Activated CD8-positive, alpha-beta T cell treated with anti-CD3 and anti-CD28 coated beads for 36 hours (primary cell): ENCODE measurements at regions of chr12 and their contacts with region 1.

Region 1: GRCh38 chr12:91382081-91382543 is 199.5 kb upstream of the DCN start:
- DNase-seq: peak; percentile 92
- ATAC-seq: peak; percentile 79
- H3K4me3 Mint-ChIP-seq: peak overlapping the region; percentile 77
- H3K27ac Mint-ChIP-seq: no peak overlapping the region
- H3K4me1 Mint-ChIP-seq: peaks cover 3% of the 10 kb centered on the region
- H3K27me3 Mint-ChIP-seq: no peaks in the 10 kb centered on the region
- CTCF ChIP-seq: peak; percentile 83

Region 2: GRCh38 chr12:91361864-91362263 is 20.2 kb before region 1 on chr12:
- CTCF ChIA-PET with region 1: interaction called, 15 read pairs
- POLR2A ChIA-PET with region 1: no interaction called
- intact Hi-C with region 1: no loop called
- DNase-seq: no peak
- ATAC-seq: peak; percentile 60
- H3K4me3 Mint-ChIP-seq: no peak overlapping the region
- H3K27ac Mint-ChIP-seq: no peak overlapping the region
- H3K4me1 Mint-ChIP-seq: no peaks in the 10 kb centered on the region
- H3K27me3 Mint-ChIP-seq: no peaks in the 10 kb centered on the region
- CTCF ChIP-seq: peak; percentile 63

Region 3: GRCh38 chr12:91400271-91400670 is 18.2 kb after region 1 on chr12:
- CTCF ChIA-PET with region 1: interaction called, 24 read pairs
- POLR2A ChIA-PET with region 1: no interaction called
- intact Hi-C with region 1: no loop called
- DNase-seq: no peak
- ATAC-seq: no peak
- H3K4me3 Mint-ChIP-seq: no peak overlapping the region
- H3K27ac Mint-ChIP-seq: no peak overlapping the region
- H3K4me1 Mint-ChIP-seq: no peaks in the 10 kb centered on the region
- H3K27me3 Mint-ChIP-seq: no peaks in the 10 kb centered on the region
- CTCF ChIP-seq: no peak

Region 4: GRCh38 chr12:91523831-91524230 is 141.7 kb after region 1 on chr12:
- CTCF ChIA-PET with region 1: no interaction called
- POLR2A ChIA-PET with region 1: no interaction called
- intact Hi-C with region 1: no loop called
- DNase-seq: no peak
- ATAC-seq: no peak
- H3K4me3 Mint-ChIP-seq: no peak overlapping the region
- H3K27ac Mint-ChIP-seq: no peak overlapping the region
- H3K4me1 Mint-ChIP-seq: no peaks in the 10 kb centered on the region
- H3K27me3 Mint-ChIP-seq: peaks cover 2% of the 10 kb centered on the region
- CTCF ChIP-seq: no peak

Region 5: DNA sequence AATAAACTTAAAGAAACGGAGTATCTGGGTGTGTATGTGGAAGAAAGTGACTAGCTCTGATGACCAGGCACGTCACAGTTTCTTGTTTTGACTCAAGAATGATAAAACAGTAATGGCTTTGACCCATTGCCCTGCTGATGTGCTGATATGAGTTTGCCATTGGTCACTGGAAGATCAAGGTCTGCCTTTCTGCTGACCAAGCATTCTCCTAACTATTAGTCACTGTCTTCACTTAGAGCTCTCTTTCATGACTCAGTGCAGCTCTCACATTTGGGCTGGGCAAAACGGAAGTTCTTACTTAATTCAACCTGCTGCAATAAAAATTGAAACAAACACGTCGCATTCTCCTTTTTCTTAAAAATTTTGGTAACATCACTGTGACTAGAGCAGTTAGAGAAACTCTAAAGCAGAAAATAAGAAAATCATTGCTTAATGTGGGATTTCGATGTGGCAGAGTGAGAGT is 396.9 kb after region 1 on chr12:
- CTCF ChIA-PET with region 1: interaction called, 10 read pairs
- POLR2A ChIA-PET with region 1: interaction called, 3 read pairs
- intact Hi-C with region 1: no loop called
- DNase-seq: peak; percentile 67
- ATAC-seq: peak; percentile 97
- H3K4me3 Mint-ChIP-seq: peak overlapping the region; percentile 66
- H3K27ac Mint-ChIP-seq: peak overlapping the region; percentile 80
- H3K4me1 Mint-ChIP-seq: peaks cover 35% of the 10 kb centered on the region
- H3K27me3 Mint-ChIP-seq: no peaks in the 10 kb centered on the region
- CTCF ChIP-seq: no peak

Region 6: DNA sequence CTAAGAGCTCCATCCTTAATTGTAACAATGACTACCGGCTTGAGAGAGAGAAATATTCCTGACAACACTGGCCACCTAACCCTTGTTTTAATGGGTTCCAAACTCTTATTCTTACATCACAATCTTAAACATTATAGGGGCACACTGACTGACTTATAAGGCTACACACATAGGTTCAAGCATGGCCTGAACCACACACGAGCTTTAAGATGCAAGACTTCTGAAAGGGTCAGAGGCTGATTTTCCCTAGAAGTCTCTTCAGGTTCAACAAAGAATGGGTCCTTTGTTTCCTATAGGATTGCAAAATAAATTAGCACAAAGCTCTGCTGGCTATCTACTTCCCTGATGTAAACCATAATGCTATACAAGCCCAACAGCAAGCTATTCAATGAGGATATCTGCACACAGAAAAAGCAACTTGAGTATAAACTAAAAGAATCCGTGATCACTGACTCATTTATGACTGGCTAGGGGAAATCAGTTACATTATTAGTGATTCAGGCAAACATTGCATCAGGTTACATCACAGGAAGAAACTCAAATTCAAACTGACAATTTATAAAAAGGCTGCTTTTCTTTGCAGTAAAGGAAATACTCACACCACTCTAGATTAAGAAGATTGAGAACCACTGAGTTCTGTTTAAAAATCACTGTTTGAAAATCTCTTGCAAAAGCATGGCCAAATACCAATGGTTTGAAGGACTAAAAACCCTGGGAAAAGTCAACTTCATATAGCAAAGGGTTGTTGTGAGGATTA is 755.0 kb after region 1 on chr12:
- CTCF ChIA-PET with region 1: interaction called, 24 read pairs
- POLR2A ChIA-PET with region 1: no interaction called
- intact Hi-C with region 1: loop called (anchors 5 kb)
- DNase-seq: no peak
- ATAC-seq: peak; percentile 41
- H3K4me3 Mint-ChIP-seq: peak overlapping the region; percentile 97
- H3K27ac Mint-ChIP-seq: peak overlapping the region; percentile 94
- H3K4me1 Mint-ChIP-seq: peaks cover 47% of the 10 kb centered on the region
- H3K27me3 Mint-ChIP-seq: no peaks in the 10 kb centered on the region
- CTCF ChIP-seq: no peak

Region 7: GRCh38 chr12:92208613-92209121 is 826.6 kb after region 1 on chr12:
- CTCF ChIA-PET with region 1: interaction called, 10 read pairs
- POLR2A ChIA-PET with region 1: no interaction called
- intact Hi-C with region 1: no loop called
- DNase-seq: peak; percentile 39
- ATAC-seq: peak; percentile 65
- H3K4me3 Mint-ChIP-seq: peak overlapping the region; percentile 67
- H3K27ac Mint-ChIP-seq: peak overlapping the region; percentile 96
- H3K4me1 Mint-ChIP-seq: peaks cover 33% of the 10 kb centered on the region
- H3K27me3 Mint-ChIP-seq: no peaks in the 10 kb centered on the region
- CTCF ChIP-seq: no peak

Region 8: GRCh38 chr12:92570056-92570753 is 1188.1 kb after region 1 on chr12:
- CTCF ChIA-PET with region 1: interaction called, 27 read pairs
- POLR2A ChIA-PET with region 1: no interaction called
- intact Hi-C with region 1: loop called (anchors 1 kb)
- DNase-seq: peak; percentile 66
- ATAC-seq: peak; percentile 89
- H3K4me3 Mint-ChIP-seq: no peak overlapping the region
- H3K27ac Mint-ChIP-seq: no peak overlapping the region
- H3K4me1 Mint-ChIP-seq: peaks cover 19% of the 10 kb centered on the region
- H3K27me3 Mint-ChIP-seq: no peaks in the 10 kb centered on the region
- CTCF ChIP-seq: peak; percentile 97